Natural killer cell (primary cell): ENCODE measurements at regions of chr7 and their contacts with region 1.

Region 1: DNA sequence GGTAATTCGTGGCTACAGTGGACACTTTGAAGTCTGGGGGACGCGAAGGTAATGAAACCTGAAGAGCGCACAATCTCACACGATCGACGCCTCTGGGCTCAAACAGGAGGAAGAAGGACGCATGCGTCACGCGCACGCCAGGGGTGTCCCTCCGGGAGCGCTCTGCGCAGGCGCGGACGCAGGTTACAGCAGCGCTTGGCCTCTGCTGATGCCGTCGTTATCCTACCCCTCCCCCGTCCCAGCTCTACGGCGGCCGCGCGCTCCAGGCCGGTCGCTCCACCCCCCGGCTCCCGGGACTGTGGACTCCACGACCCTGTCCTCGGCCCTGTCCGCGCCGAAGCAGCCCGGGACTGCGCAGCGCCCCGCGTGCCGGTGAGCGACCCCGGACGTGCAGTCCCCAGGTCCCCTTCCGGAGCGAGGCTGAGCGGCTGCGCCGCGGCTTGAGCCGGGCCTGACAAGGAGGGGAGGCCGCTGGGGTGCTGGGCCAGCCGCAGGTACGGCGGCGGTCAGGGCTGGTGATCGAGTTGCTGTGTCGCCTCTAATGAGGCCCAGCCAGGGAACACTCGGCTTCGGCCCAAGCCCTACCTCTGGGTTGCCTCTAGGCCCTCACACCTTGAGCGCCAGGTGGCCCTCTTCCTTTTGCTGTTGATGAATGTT is at the start of gene TMEM106B:
- DNase-seq: peak; percentile 93 to 100
- ATAC-seq: peak; percentile 89 to 97 (median 89)
- H3K4me3 ChIP-seq: peak within 1 kb of the TSS; percentile 62
- H3K4me3 Mint-ChIP-seq: peak within 1 kb of the TSS; percentile 98
- H3K27ac ChIP-seq: peak within 1 kb of the TSS; percentile 86
- H3K27ac Mint-ChIP-seq: peak within 1 kb of the TSS; percentile 97 to 98
- H3K4me1 ChIP-seq: peaks cover 7% of the 10 kb centered on the region
- H3K4me1 Mint-ChIP-seq: peaks cover 22 to 33% of the 10 kb centered on the region in 2 donors
- H3K27me3 ChIP-seq: peaks cover 5% of the 10 kb centered on the region
- H3K27me3 Mint-ChIP-seq: peaks cover 15 to 34% of the 10 kb centered on the region in 2 donors
- CTCF ChIP-seq: no peak
- total RNA-seq, gene TMEM106B: 18.6 to 28.5 (median 20.4) TPM

Region 2: DNA sequence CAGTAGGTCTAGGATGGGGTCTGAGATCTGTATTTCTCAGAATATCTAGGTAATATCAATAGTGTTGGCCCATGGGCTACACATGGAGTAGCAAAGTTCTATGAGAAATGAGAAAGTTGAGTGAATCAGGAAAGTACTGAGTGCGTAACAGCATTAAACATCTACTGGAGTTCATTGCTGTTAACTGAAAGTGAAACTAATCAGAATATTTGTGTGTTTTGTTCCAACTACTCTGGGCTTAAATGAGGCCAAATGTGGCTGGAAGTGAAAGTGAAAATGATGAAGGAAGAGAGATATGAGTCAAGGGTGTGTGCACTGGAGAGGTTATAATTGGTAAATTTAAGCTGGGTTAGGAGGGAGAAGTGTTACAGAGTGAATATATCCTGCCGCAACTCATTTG is 46.4 kb after region 1 on chr7:
- intact Hi-C with region 1: loop called (anchors 1 kb)
- DNase-seq: peak in 1 of 2 donors; percentile 82
- ATAC-seq: peak; percentile 96 to 99 (median 97)
- H3K4me3 ChIP-seq: peak overlapping the region; percentile 19
- H3K4me3 Mint-ChIP-seq: no peak overlapping the region
- H3K27ac ChIP-seq: peak overlapping the region; percentile 81
- H3K27ac Mint-ChIP-seq: no peak overlapping the region
- H3K4me1 ChIP-seq: peaks cover 7% of the 10 kb centered on the region
- H3K4me1 Mint-ChIP-seq: no peaks in the 10 kb centered on the region
- H3K27me3 ChIP-seq: no peaks in the 10 kb centered on the region
- H3K27me3 Mint-ChIP-seq: no peaks in the 10 kb centered on the region
- CTCF ChIP-seq: no peak

Region 3: GRCh38 chr7:12314199-12314598 is 103.0 kb after region 1 on chr7:
- intact Hi-C with region 1: no loop called
- DNase-seq: no peak
- ATAC-seq: no peak
- H3K4me3 ChIP-seq: no peak overlapping the region
- H3K4me3 Mint-ChIP-seq: no peak overlapping the region
- H3K27ac ChIP-seq: no peak overlapping the region
- H3K27ac Mint-ChIP-seq: no peak overlapping the region
- H3K4me1 ChIP-seq: no peaks in the 10 kb centered on the region
- H3K4me1 Mint-ChIP-seq: no peaks in the 10 kb centered on the region
- H3K27me3 ChIP-seq: no peaks in the 10 kb centered on the region
- H3K27me3 Mint-ChIP-seq: peaks cover 7 to 9% of the 10 kb centered on the region in 2 donors
- CTCF ChIP-seq: no peak

Region 4: GRCh38 chr7:12458520-12459131 is 247.4 kb after region 1 on chr7:
- intact Hi-C with region 1: no loop called
- DNase-seq: peak in 1 of 2 donors; percentile 49
- ATAC-seq: peak in 1 of 3 donors; percentile 43
- H3K4me3 ChIP-seq: no peak overlapping the region
- H3K4me3 Mint-ChIP-seq: no peak overlapping the region
- H3K27ac ChIP-seq: no peak overlapping the region
- H3K27ac Mint-ChIP-seq: no peak overlapping the region
- H3K4me1 ChIP-seq: no peaks in the 10 kb centered on the region
- H3K4me1 Mint-ChIP-seq: no peaks in the 10 kb centered on the region
- H3K27me3 ChIP-seq: no peaks in the 10 kb centered on the region
- H3K27me3 Mint-ChIP-seq: peaks cover 0 to 2% of the 10 kb centered on the region in 2 donors
- CTCF ChIP-seq: peak; percentile 30

Region 5: DNA sequence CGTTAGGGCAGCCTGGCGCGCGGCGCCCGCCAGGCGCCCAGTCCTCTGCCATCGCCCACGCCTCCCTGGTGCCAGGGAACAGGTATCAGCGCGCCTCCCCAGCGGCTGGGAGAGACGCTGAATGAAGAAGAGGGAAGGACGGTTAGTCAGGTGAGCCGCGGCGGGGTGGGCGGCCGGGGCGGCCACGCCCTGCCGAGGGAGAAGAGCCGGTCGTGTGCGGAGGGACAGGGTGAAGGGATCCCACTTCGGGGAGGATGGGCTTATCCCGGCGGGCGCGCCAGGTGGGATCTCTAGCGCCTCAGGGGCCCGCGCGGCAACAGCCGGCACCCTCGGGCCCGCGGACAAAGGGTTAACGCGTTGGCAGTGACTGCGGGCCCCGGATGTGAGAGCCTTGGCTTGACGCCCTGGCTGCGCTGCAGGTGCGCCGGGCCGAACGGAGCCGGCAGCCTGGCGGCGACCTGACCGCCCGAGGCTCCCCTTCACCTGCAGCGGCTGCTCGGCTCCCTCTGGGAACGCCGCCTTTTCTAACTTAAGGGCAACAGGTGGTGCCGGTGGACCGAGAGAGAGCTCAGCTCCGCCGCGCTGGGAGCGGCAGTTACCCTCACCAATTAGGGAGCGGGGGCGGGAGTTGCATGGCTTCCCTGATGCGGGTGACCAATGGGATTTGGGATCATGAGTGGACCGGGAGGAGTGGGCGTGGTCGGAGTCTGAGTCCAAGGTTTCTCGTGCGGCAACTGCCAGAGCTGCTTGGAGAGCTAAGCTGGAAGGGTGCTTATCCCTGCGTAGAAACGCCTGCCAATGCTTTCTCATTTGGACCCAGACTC is 475.9 kb after region 1 on chr7 and contains the start of gene ARL4A:
- intact Hi-C with region 1: loop called (anchors 5 kb)
- DNase-seq: peak; percentile 75 to 93
- ATAC-seq: peak; percentile 34 to 58 (median 43)
- H3K4me3 ChIP-seq: peak within 1 kb of the TSS; percentile 84
- H3K4me3 Mint-ChIP-seq: peak within 1 kb of the TSS; percentile 90
- H3K27ac ChIP-seq: peak within 1 kb of the TSS; percentile 97
- H3K27ac Mint-ChIP-seq: peak within 1 kb of the TSS; percentile 96 to 99
- H3K4me1 ChIP-seq: peaks cover 16% of the 10 kb centered on the region
- H3K4me1 Mint-ChIP-seq: peaks cover 17 to 28% of the 10 kb centered on the region in 2 donors
- H3K27me3 ChIP-seq: no peaks in the 10 kb centered on the region
- H3K27me3 Mint-ChIP-seq: no peaks in the 10 kb centered on the region
- CTCF ChIP-seq: peak; percentile 60
- total RNA-seq, gene ARL4A: 54.7 to 81.4 (median 55.5) TPM